Right ventricle myocardium superior (tissue), 1 donor: ENCODE measurements at regions of chr1 and their contacts with region 1.

Region 1: GRCh38 chr1:159162516-159163265 is 8.7 kb upstream of the CADM3 start:
- DNase-seq: no peak
- ATAC-seq: no peak

Region 2: DNA sequence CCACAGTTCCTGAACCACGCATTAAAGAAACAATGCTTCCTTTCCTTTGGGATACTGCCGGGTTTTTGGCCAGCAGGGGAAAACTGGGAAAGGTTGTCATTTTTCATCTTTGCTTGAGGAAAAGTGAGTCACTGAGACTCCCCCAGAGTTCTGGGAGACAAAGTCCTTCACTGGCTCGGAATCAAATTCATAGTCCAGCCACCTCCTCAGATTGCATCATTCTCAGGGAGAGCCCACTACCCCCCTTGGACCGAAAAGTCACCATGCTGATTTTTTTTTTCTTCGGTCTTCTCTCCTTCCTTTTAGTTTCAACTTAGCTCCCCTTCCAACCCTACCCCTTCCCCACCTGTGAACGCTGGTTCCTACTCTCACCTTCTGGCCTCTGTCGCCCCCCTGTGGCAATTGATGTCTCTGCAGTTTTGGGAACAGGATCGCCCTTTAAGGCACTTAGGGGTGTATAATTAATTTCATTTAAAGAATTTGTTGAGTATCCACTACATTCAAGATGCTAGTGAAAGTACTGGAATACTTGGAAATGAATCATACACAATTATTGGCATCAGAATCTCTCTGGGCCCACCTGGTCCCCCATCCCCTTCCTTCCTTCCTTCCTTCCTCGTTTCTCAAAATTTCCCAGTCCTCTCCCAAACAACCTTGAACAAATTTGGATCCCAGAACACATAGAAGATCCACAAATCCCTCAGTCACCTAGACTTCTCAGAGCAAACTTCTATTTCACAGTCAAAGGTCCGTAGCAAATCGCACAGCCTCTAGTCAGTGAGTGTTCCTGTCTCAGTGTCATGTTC is 48.8 kb after region 1 on chr1:
- intact Hi-C with region 1: loop called (anchors 2 kb)
- DNase-seq: peak; percentile 43
- ATAC-seq: no peak

Region 3: GRCh38 chr1:159780583-159781582 is 618.2 kb after region 1 on chr1 and contains the start of gene DUSP23:
- intact Hi-C with region 1: no loop called
- DNase-seq: peak; percentile 99
- ATAC-seq: peak; percentile 99
- total RNA-seq, gene DUSP23: 15.5 TPM